ENCODE measurements at regions of chr11 and their contacts with region 1.

Region 1: GRCh38 chr11:58513747-58514367 is 6.0 kb upstream of the OR5B21 start:
- DNase-seq: no peak
- H3K4me3 ChIP-seq: no peak overlapping the region
- CTCF ChIP-seq: peak; percentile 48

Region 2: GRCh38 chr11:58495906-58496305 is 18.0 kb before region 1 on chr11:
- CTCF ChIA-PET with region 1: interaction called, 10 read pairs
- POLR2A ChIA-PET with region 1: no interaction called
- DNase-seq: no peak
- H3K4me3 ChIP-seq: no peak overlapping the region
- CTCF ChIP-seq: no peak

Region 3: GRCh38 chr11:58503361-58503856 is 10.4 kb before region 1 on chr11:
- CTCF ChIA-PET with region 1: interaction called, 10 read pairs
- POLR2A ChIA-PET with region 1: no interaction called
- DNase-seq: no peak
- H3K4me3 ChIP-seq: no peak overlapping the region
- CTCF ChIP-seq: no peak

Region 4: DNA sequence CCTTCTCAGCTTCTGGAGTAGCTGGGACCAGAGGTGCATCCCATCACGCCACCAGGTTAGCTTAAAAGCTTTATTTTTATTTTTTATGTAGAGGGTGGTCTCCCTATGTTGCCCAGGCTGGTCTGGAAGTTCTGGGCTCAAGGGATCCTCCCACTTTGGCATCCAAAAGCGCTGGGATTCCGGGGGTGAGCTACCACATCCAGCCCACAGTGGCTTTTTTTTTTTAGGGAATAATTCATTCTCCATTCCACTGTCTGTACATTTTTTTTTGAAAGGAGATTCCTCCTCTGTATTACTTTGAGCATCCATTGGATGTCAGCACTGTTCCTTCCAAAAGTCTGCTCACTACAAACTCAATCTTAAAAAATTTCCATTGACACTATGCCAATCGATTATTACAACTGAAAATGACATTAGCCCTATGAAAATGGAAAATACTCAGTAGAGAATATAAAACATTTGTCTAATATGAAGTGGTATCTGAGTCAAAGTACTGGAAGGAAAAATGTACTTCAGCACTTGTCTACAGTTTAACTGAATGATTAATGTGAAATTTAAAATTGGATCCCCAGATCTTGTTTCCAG is 63.1 kb after region 1 on chr11:
- CTCF ChIA-PET with region 1: no interaction called
- POLR2A ChIA-PET with region 1: no interaction called
- DNase-seq: no peak
- H3K4me3 ChIP-seq: peak overlapping the region; percentile 93
- CTCF ChIP-seq: peak; percentile 24

Region 5: DNA sequence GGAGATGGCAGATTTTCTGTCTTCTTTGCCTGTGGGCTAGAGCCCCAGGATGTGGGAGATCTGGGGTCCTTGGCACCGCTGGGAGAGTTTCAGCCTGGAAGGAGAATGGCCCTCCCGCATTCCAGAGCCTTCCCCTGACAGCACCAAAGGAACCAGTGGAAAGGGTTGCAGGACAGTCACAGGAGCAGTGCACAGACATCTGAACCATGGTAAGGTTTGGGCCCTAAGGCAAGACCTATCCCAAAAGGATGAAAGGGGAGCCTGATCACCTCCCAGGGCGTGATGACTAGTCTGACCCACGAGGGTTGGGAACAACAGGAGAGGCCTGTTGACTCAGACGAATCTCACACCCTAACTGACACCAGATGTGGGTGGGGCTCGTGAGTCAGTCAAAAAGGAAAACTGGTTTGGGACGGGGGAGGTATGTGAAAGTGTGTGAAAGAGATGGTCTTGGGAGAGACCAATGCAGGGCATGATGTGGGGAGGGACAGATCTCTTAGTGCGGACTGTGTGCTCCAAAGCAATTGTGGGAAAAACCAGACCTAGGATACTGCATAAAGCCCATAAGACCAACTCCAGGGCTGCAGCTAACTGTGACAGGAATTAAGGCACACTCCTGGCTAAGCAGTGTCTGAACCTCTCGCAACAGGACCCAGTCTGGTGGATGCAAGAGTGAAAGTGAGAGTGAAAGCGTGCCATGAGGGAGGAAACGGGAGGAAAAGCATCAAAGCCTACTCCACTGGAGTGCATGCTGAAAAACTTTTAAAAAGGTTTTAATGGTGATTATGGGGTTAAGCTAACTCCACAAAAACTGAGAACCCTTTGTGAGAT is 257.0 kb after region 1 on chr11:
- CTCF ChIA-PET with region 1: no interaction called
- POLR2A ChIA-PET with region 1: no interaction called
- DNase-seq: no peak
- H3K4me3 ChIP-seq: no peak overlapping the region
- CTCF ChIP-seq: no peak

Measured in AG04449 (cell line).